T-cell (primary cell): ENCODE measurements at regions of chr15 and their contacts with region 1.

Region 1: DNA sequence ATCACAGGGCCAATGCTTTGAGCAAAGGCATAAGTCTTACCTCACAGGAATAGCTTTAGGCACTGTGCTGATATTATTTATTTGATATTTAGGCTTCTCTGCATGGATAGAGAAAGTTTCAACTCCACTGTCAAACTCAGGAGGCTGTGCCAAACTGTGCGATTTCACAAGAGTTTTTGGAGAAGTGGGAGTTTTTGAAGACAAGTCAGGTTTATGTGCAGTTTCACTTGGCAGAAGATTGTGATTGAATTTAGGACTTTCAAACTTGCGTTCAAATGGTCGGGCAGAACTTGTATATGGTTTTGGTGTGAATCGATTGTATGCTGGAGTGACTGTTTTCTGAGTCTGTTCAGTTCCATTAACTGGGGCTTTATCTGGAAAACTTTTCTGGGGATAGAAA is 113.7 kb downstream of the TJP1 start:
- DNase-seq: no peak
- ATAC-seq: no peak
- H3K4me3 ChIP-seq: no peak overlapping the region
- H3K4me3 Mint-ChIP-seq: no peak overlapping the region
- H3K27ac ChIP-seq: no peak overlapping the region
- H3K27ac Mint-ChIP-seq: no peak overlapping the region
- H3K4me1 ChIP-seq: no peaks in the 10 kb centered on the region
- H3K4me1 Mint-ChIP-seq: no peaks in the 10 kb centered on the region
- H3K27me3 ChIP-seq: peaks cover 0 to 7% of the 10 kb centered on the region in 2 experiments
- H3K27me3 Mint-ChIP-seq: no peaks in the 10 kb centered on the region

Region 2: GRCh38 chr15:30791239-30792175 is 1083.0 kb after region 1 on chr15:
- CTCF ChIA-PET with region 1: no interaction called
- POLR2A ChIA-PET with region 1: interaction called in 1 of 2 experiments, 10 read pairs
- DNase-seq: no peak
- ATAC-seq: no peak
- H3K4me3 ChIP-seq: no peak overlapping the region
- H3K4me3 Mint-ChIP-seq: no peak overlapping the region
- H3K27ac ChIP-seq: no peak overlapping the region
- H3K27ac Mint-ChIP-seq: no peak overlapping the region
- H3K4me1 ChIP-seq: no peaks in the 10 kb centered on the region
- H3K4me1 Mint-ChIP-seq: no peaks in the 10 kb centered on the region
- H3K27me3 ChIP-seq: peaks cover 0 to 20% of the 10 kb centered on the region in 2 experiments
- H3K27me3 Mint-ChIP-seq: peaks cover 3 to 23% of the 10 kb centered on the region in 2 donors